Calu3 (cell line): ENCODE measurements at regions of chr10 and their contacts with region 1.

Region 1: GRCh38 chr10:116490028-116490662 is 55.6 kb upstream of the PNLIP start:
- DNase-seq: no peak
- H3K4me3 Mint-ChIP-seq: no peak overlapping the region
- H3K27ac Mint-ChIP-seq: no peak overlapping the region
- H3K4me1 Mint-ChIP-seq: no peaks in the 10 kb centered on the region
- H3K27me3 Mint-ChIP-seq: peaks cover 16% of the 10 kb centered on the region
- CTCF ChIP-seq: peak; percentile 24

Region 2: GRCh38 chr10:116211682-116212081 is 278.5 kb before region 1 on chr10:
- CTCF ChIA-PET with region 1: no interaction called
- intact Hi-C with region 1: no loop called
- DNase-seq: no peak
- H3K4me3 Mint-ChIP-seq: no peak overlapping the region
- H3K27ac Mint-ChIP-seq: no peak overlapping the region
- H3K4me1 Mint-ChIP-seq: no peaks in the 10 kb centered on the region
- H3K27me3 Mint-ChIP-seq: no peaks in the 10 kb centered on the region
- CTCF ChIP-seq: no peak

Region 3: DNA sequence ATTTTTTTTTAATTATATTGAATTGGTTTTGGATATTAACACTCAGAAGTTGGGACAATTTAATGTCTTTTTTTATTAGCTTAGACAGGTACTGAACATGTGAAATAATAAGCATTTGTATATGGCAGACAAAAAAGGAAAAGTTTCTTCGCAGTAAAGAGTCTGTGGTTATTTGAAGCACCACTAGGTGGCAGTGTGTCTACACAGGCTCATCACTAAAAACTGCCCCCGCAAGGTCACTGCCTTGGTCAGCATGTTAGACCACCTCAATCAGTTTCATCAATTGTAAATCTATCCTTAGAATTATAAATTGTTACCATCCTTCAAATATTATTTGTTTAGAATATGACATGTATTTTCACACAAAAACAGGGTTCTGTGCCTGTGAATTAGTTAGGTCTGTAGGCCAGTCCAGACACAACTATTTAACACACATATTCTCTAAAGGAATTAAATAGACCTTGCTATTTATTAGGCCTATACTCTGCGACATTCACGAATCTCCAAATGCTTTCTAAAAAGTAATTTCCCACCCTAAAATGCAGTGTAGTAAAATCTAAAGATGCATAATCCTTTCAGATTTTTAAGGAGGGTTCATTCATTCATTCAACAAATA is 45.5 kb before region 1 on chr10:
- CTCF ChIA-PET with region 1: no interaction called
- intact Hi-C with region 1: loop called (anchors 5 kb)
- DNase-seq: peak; percentile 9
- H3K4me3 Mint-ChIP-seq: no peak overlapping the region
- H3K27ac Mint-ChIP-seq: no peak overlapping the region
- H3K4me1 Mint-ChIP-seq: no peaks in the 10 kb centered on the region
- H3K27me3 Mint-ChIP-seq: peaks cover 25% of the 10 kb centered on the region
- CTCF ChIP-seq: peak; percentile 41

Region 4: GRCh38 chr10:116470768-116471415 is 19.3 kb before region 1 on chr10:
- CTCF ChIA-PET with region 1: interaction called, 3 read pairs
- intact Hi-C with region 1: loop called (anchors 2 kb)
- DNase-seq: peak; percentile 45
- H3K4me3 Mint-ChIP-seq: no peak overlapping the region
- H3K27ac Mint-ChIP-seq: no peak overlapping the region
- H3K4me1 Mint-ChIP-seq: no peaks in the 10 kb centered on the region
- H3K27me3 Mint-ChIP-seq: no peaks in the 10 kb centered on the region
- CTCF ChIP-seq: peak; percentile 28

Region 5: DNA sequence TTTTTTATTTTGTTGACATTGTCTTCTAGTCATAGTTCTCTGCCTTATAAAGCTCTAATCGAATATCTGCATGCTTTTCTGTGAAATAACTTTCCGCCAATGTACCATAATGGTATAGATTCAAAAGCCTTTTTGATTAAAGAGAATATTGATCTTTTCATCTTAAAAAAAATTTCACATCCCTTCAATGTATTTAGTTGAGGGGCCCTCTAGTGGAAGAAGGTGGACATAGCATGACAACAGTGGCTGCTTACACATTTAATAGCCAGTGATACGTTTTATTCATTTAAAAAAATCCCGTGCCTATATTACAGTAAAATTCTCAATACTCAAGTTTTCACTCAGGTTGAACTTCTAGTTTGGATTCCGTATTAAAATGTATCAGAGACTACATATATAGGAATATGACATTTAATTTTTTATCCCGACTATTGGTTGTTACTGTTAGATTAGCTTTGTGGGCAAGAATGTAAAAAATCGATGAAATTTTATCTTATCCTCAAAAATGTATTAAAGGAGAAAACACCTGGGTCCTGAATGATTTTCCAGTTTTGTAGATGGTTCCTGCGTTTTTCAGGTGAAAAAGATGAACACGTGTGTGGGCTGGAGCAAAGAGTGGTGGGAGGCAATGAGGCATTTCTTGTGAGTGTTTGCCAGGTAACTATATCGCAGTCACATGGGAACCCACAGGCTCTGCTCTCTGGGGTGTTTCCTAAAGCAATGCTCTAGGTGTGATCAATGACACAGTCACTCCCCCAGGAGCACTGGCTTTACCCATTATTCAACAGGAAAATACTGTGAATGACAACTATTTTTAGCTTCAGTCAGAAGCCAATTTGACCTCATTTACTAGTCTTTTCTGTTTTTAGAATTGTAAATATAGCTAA is 31.5 kb after region 1 on chr10:
- CTCF ChIA-PET with region 1: no interaction called
- intact Hi-C with region 1: no loop called
- DNase-seq: peak; percentile 38
- H3K4me3 Mint-ChIP-seq: no peak overlapping the region
- H3K27ac Mint-ChIP-seq: no peak overlapping the region
- H3K4me1 Mint-ChIP-seq: no peaks in the 10 kb centered on the region
- H3K27me3 Mint-ChIP-seq: no peaks in the 10 kb centered on the region
- CTCF ChIP-seq: no peak